ENCODE measurements at regions of chr17 and their contacts with region 1.

Region 1: GRCh38 chr17:76408052-76408849 is 23.8 kb downstream of the SPHK1 start:
- DNase-seq: no peak
- H3K4me3 ChIP-seq: no peak overlapping the region
- H3K27ac ChIP-seq: peak overlapping the region; percentile 87
- H3K4me1 ChIP-seq: peaks cover 86% of the 10 kb centered on the region
- H3K27me3 ChIP-seq: no peaks in the 10 kb centered on the region
- CTCF ChIP-seq: peak; percentile 85

Region 2: GRCh38 chr17:76452660-76453430 is 44.6 kb after region 1 on chr17 and contains the start of gene UBE2O:
- intact Hi-C with region 1: loop called (anchors 10 kb)
- DNase-seq: peak; percentile 90
- H3K4me3 ChIP-seq: peak within 1 kb of the TSS; percentile 99
- H3K27ac ChIP-seq: peak within 1 kb of the TSS; percentile 94
- H3K4me1 ChIP-seq: peaks cover 51% of the 10 kb centered on the region
- H3K27me3 ChIP-seq: no peaks in the 10 kb centered on the region
- CTCF ChIP-seq: peak; percentile 46
- total RNA-seq, gene UBE2O: 35.7 TPM